PC-9 (cell line): ENCODE measurements at regions of chr13 and their contacts with region 1.

Region 1: DNA sequence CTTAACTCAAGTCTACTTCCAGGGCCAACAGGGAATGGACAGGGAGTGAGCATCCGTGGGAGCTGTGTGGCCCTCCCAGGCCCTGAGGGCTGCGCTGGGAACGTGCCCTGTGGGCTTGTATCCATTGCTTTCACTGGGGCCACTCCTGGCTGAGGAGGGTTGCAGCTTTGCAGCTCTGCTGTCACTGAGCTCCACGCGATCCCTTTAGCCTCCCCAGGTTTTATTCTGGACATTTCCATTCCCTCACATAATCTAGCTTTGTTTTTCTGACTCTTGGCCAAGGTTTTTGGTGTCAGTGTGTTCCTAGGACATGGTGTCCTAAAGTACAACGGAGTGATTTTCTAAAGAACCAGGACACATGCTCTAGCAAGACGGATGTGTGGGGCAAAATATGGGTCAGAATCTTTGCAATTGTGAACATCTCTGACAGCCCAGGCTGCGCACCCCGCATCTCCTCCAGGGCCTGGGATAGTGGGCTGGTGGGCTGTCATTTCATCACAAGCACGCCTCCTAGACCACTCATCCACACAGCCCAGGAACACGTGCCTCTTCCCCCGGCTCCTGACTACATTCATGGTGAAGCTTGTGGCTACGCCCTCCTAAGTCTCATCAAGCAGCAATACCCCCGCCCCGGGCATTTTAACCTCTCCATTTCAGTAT is 28.0 kb downstream of the GGACT start:
- DNase-seq: no peak
- H3K4me3 ChIP-seq: no peak overlapping the region
- H3K27ac ChIP-seq: no peak overlapping the region
- H3K4me1 ChIP-seq: no peaks in the 10 kb centered on the region
- H3K27me3 ChIP-seq: no peaks in the 10 kb centered on the region
- CTCF ChIP-seq: no peak

Region 2: GRCh38 chr13:100483841-100484381 is 76.7 kb before region 1 on chr13:
- CTCF ChIA-PET with region 1: no interaction called
- POLR2A ChIA-PET with region 1: no interaction called
- intact Hi-C with region 1: loop called (anchors 2 kb)
- DNase-seq: no peak
- H3K4me3 ChIP-seq: no peak overlapping the region
- H3K27ac ChIP-seq: no peak overlapping the region
- H3K4me1 ChIP-seq: no peaks in the 10 kb centered on the region
- H3K27me3 ChIP-seq: no peaks in the 10 kb centered on the region
- CTCF ChIP-seq: no peak